ENCODE measurements at regions of chr17 and their contacts with region 1.

Region 1: GRCh38 chr17:72556944-72557826 is 436.4 kb downstream of the SOX9 start:
- DNase-seq: peak; percentile 85
- ATAC-seq: peak; percentile 82
- H3K4me3 Mint-ChIP-seq: no peak overlapping the region
- H3K27ac Mint-ChIP-seq: no peak overlapping the region
- H3K4me1 Mint-ChIP-seq: peaks cover 6% of the 10 kb centered on the region
- H3K27me3 Mint-ChIP-seq: no peaks in the 10 kb centered on the region
- CTCF ChIP-seq: peak; percentile 88

Region 2: GRCh38 chr17:72362376-72363088 is 194.7 kb before region 1 on chr17:
- CTCF ChIA-PET with region 1: no interaction called
- POLR2A ChIA-PET with region 1: no interaction called
- DNase-seq: no peak
- ATAC-seq: no peak
- H3K4me3 Mint-ChIP-seq: no peak overlapping the region
- H3K27ac Mint-ChIP-seq: no peak overlapping the region
- H3K4me1 Mint-ChIP-seq: peaks cover 4% of the 10 kb centered on the region; the same call in 1 of the 2 replicates
- H3K27me3 Mint-ChIP-seq: no peaks in the 10 kb centered on the region; the same call in 1 of the 2 replicates
- CTCF ChIP-seq: no peak

Region 3: GRCh38 chr17:72492494-72492893 is 64.7 kb before region 1 on chr17:
- CTCF ChIA-PET with region 1: no interaction called
- POLR2A ChIA-PET with region 1: no interaction called
- DNase-seq: no peak
- ATAC-seq: no peak
- H3K4me3 Mint-ChIP-seq: no peak overlapping the region
- H3K27ac Mint-ChIP-seq: no peak overlapping the region
- H3K4me1 Mint-ChIP-seq: peaks cover 7% of the 10 kb centered on the region
- H3K27me3 Mint-ChIP-seq: peaks cover 3% of the 10 kb centered on the region; the same call in 1 of the 2 replicates
- CTCF ChIP-seq: no peak

Region 4: GRCh38 chr17:72539981-72540897 is 16.9 kb before region 1 on chr17:
- CTCF ChIA-PET with region 1: interaction called, 28 read pairs
- POLR2A ChIA-PET with region 1: no interaction called
- DNase-seq: peak; percentile 82
- ATAC-seq: peak; percentile 83
- H3K4me3 Mint-ChIP-seq: peak overlapping the region; percentile 64
- H3K27ac Mint-ChIP-seq: peak overlapping the region; percentile 91
- H3K4me1 Mint-ChIP-seq: peaks cover 19% of the 10 kb centered on the region
- H3K27me3 Mint-ChIP-seq: no peaks in the 10 kb centered on the region; the same call in none of the 2 replicates
- CTCF ChIP-seq: peak; percentile 88

Region 5: DNA sequence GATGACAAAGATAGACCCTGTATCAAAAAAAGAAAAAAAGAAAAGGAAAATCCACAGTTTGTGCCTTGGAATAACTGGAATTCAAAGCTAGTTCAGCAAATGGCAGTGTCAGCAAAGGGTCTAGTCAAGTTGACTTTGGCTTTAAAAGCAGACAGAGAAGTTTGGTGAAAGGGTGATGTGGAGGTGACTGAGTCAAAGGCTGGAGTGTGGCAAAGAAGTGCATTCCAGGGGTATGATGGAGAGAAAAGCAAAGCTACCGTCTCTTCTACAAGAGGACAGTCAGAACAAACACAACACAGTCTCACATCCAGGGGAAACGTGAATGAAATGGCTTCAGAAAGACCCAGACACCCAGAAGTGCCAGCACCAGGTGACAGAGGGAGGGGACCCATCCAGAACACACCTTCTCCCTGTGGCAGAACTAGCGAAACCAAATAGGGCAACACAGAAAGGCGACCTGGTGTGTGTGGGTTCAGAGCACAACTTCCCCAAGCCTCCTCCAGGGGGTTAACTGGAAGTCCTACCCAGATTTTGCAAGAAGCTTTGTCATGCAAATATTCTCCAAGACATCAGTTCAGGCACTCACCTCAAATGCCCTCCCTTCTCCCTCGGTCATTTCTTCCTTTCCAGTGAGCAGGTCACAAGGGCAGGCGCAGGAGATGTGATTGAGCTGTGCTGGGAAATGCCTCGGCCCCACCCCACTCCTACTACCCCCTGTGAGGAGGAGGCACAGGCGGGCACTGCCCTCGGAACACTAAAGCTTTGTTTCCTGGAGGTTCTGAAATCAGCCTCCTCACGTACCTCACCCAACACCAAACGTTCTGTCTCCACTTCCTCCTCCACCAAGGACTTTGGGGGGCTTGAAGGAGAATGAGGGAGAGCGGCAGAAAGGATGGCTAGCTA is 45.6 kb after region 1 on chr17:
- CTCF ChIA-PET with region 1: interaction called, 23 read pairs
- POLR2A ChIA-PET with region 1: no interaction called
- DNase-seq: peak; percentile 48
- ATAC-seq: peak; percentile 93
- H3K4me3 Mint-ChIP-seq: peak overlapping the region; percentile 42
- H3K27ac Mint-ChIP-seq: no peak overlapping the region
- H3K4me1 Mint-ChIP-seq: peaks cover 32% of the 10 kb centered on the region
- H3K27me3 Mint-ChIP-seq: peaks cover 16% of the 10 kb centered on the region
- CTCF ChIP-seq: no peak

Region 6: GRCh38 chr17:72671016-72671415 is 113.8 kb after region 1 on chr17:
- CTCF ChIA-PET with region 1: interaction called, 13 read pairs
- POLR2A ChIA-PET with region 1: no interaction called
- DNase-seq: no peak
- ATAC-seq: no peak
- H3K4me3 Mint-ChIP-seq: no peak overlapping the region
- H3K27ac Mint-ChIP-seq: no peak overlapping the region
- H3K4me1 Mint-ChIP-seq: peaks cover 12% of the 10 kb centered on the region
- H3K27me3 Mint-ChIP-seq: no peaks in the 10 kb centered on the region; the same call in 1 of the 2 replicates
- CTCF ChIP-seq: no peak

Region 7: GRCh38 chr17:72719578-72720493 is 162.7 kb after region 1 on chr17:
- CTCF ChIA-PET with region 1: interaction called, 147 read pairs
- POLR2A ChIA-PET with region 1: no interaction called
- DNase-seq: no peak
- ATAC-seq: no peak
- H3K4me3 Mint-ChIP-seq: no peak overlapping the region
- H3K27ac Mint-ChIP-seq: no peak overlapping the region
- H3K4me1 Mint-ChIP-seq: peaks cover 46% of the 10 kb centered on the region
- H3K27me3 Mint-ChIP-seq: no peaks in the 10 kb centered on the region
- CTCF ChIP-seq: no peak

Region 8: GRCh38 chr17:73156166-73156840 is 599.1 kb after region 1 on chr17:
- CTCF ChIA-PET with region 1: interaction called, 11 read pairs
- POLR2A ChIA-PET with region 1: no interaction called
- DNase-seq: peak; percentile 85
- ATAC-seq: peak; percentile 95
- H3K4me3 Mint-ChIP-seq: no peak overlapping the region
- H3K27ac Mint-ChIP-seq: no peak overlapping the region
- H3K4me1 Mint-ChIP-seq: peaks cover 40% of the 10 kb centered on the region
- H3K27me3 Mint-ChIP-seq: no peaks in the 10 kb centered on the region
- CTCF ChIP-seq: peak; percentile 58